PC-9 (cell line): ENCODE measurements at regions of chr11 and their contacts with region 1.

Region 1: DNA sequence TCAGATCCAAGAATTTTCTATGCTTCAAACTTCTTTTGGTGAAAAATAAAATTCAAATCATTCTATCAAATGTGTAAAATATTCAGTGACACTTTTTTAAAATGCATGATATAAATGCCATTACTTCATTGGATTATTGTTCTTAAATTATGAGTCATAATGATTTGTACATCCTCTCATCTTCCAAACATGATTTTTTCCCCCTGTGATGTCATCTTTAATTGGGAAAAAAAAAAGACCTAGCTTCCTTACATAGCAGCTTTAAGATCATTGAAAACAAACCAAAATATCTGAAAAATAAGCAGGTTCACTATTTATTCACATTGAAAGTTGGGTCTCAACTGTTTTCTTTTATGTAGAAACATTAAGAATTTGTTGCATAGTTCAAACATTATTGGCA is 1549.4 kb downstream of the LRRC4C start:
- DNase-seq: no peak
- H3K4me3 ChIP-seq: no peak overlapping the region
- H3K27ac ChIP-seq: no peak overlapping the region
- H3K4me1 ChIP-seq: no peaks in the 10 kb centered on the region
- H3K27me3 ChIP-seq: no peaks in the 10 kb centered on the region
- CTCF ChIP-seq: no peak

Region 2: DNA sequence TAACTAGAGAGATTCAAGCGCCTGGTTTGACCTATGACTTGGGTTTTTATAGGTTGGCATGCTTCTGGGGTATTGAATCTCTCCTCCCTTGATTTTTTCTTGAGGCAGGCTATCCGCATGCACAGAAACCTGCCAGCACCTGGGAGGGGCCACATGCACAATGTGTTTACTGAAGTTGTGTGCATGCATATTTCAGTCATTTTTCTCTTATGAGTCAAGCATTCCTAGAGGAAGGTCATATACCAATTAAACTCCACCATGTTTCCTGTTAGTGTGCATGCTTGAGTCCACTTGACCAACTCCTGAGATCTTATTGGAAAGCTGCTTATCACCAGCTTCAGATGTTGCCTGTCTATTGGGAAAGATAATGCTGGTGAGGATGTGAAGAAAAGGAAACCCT is 169.0 kb before region 1 on chr11:
- CTCF ChIA-PET with region 1: no interaction called
- POLR2A ChIA-PET with region 1: interaction called, 15 read pairs
- intact Hi-C with region 1: no loop called
- DNase-seq: no peak
- H3K4me3 ChIP-seq: no peak overlapping the region
- H3K27ac ChIP-seq: no peak overlapping the region
- H3K4me1 ChIP-seq: no peaks in the 10 kb centered on the region
- H3K27me3 ChIP-seq: no peaks in the 10 kb centered on the region
- CTCF ChIP-seq: no peak